ENCODE measurements at regions of chr11 and their contacts with region 1.

Region 1: GRCh38 chr11:13567551-13567950 is 71.8 kb upstream of the PTH start:
- DNase-seq: no peak
- H3K4me3 ChIP-seq: no peak overlapping the region
- H3K4me3 Mint-ChIP-seq: no peak overlapping the region
- H3K27ac ChIP-seq: no peak overlapping the region
- H3K27ac Mint-ChIP-seq: no peak overlapping the region
- H3K4me1 ChIP-seq: no peaks in the 10 kb centered on the region
- H3K4me1 Mint-ChIP-seq: no peaks in the 10 kb centered on the region
- H3K27me3 ChIP-seq: no peaks in the 10 kb centered on the region
- H3K27me3 Mint-ChIP-seq: peaks cover 0 to 3% (median 0%) of the 10 kb centered on the region in 3 donors
- CTCF ChIP-seq: no peak

Region 2: DNA sequence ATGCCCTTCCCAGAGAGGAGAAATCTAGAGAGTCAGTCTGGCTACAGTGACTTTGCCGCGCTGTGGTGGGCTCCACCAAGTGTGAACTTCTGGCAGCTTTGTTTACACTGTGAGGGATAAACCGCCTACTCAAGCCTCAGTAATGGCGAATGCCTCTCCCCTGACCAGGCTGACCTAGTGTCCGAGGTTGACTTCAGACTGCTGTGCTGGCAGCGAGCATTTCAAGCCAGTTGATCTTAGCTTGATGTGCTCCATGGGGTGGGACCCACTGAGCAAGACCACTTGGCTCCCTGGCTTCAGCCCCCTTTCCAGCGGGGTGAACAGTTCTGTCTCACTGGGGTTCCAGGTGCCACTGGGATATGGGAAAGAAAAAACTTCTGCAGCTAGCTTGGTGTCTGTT is 33.2 kb before region 1 on chr11:
- intact Hi-C with region 1: loop called in 1 of 2 experiments (anchors 5 kb)
- DNase-seq: no peak
- H3K4me3 ChIP-seq: no peak overlapping the region
- H3K4me3 Mint-ChIP-seq: no peak overlapping the region
- H3K27ac ChIP-seq: no peak overlapping the region
- H3K27ac Mint-ChIP-seq: no peak overlapping the region
- H3K4me1 ChIP-seq: no peaks in the 10 kb centered on the region
- H3K4me1 Mint-ChIP-seq: no peaks in the 10 kb centered on the region
- H3K27me3 ChIP-seq: no peaks in the 10 kb centered on the region
- H3K27me3 Mint-ChIP-seq: peaks cover 0 to 2% (median 1%) of the 10 kb centered on the region in 3 donors
- CTCF ChIP-seq: no peak

Measured in CD14-positive monocyte (primary cell).